H1 (cell line): ENCODE measurements at regions of chr3 and their contacts with region 1.

Region 1: GRCh38 chr3:170414202-170414663 is 4.4 kb upstream of the CLDN11 start:
- DNase-seq: no peak
- H3K4me3 ChIP-seq: no peak overlapping the region
- H3K27ac ChIP-seq: no peak overlapping the region
- H3K4me1 ChIP-seq: peaks cover 0 to 5% (median 4%) of the 10 kb centered on the region in 4 experiments; a peak in 6 of 7 replicates
- H3K27me3 ChIP-seq: peaks cover 5 to 18% (median 16%) of the 10 kb centered on the region in 4 experiments
- CTCF ChIP-seq: peak; percentile 39 to 95 (median 94)
- EP300 ChIP-seq: no peak
- POLR2A ChIP-seq: no peak
- RAD21 ChIP-seq: peak; percentile 98 to 99

Region 2: GRCh38 chr3:169966428-169966950 is 447.7 kb before region 1 on chr3 and contains the start of gene SEC62:
- CTCF ChIA-PET with region 1: no interaction called
- POLR2A ChIA-PET with region 1: no interaction called
- DNase-seq: peak; percentile 85 to 98
- H3K4me3 ChIP-seq: peak within 1 kb of the TSS; percentile 85 to 98 (median 90)
- H3K27ac ChIP-seq: peak within 1 kb of the TSS; percentile 82
- H3K4me1 ChIP-seq: peaks cover 0 to 12% (median 1%) of the 10 kb centered on the region in 4 experiments; a peak in 3 of 7 replicates
- H3K27me3 ChIP-seq: no peaks in the 10 kb centered on the region
- CTCF ChIP-seq: peak; percentile 38 to 68 (median 47)
- EP300 ChIP-seq: peak in 1 of 2 experiments; percentile 65; a peak in 1 of 3 replicates
- POLR2A ChIP-seq: peak; percentile 93 to 95
- RAD21 ChIP-seq: peak; percentile 61 to 72
- total RNA-seq, gene SEC62: 67.8 and 68.1 TPM in 2 replicates

Region 3: GRCh38 chr3:170317954-170318353 is 96.3 kb before region 1 on chr3:
- CTCF ChIA-PET with region 1: interaction called, 13 read pairs
- POLR2A ChIA-PET with region 1: no interaction called
- DNase-seq: no peak
- H3K4me3 ChIP-seq: no peak overlapping the region
- H3K27ac ChIP-seq: no peak overlapping the region
- H3K4me1 ChIP-seq: peaks cover 0 to 4% (median 1%) of the 10 kb centered on the region in 4 experiments; a peak in 2 of 7 replicates
- H3K27me3 ChIP-seq: no peaks in the 10 kb centered on the region; a peak in 1 of 7 replicates
- CTCF ChIP-seq: no peak
- EP300 ChIP-seq: no peak
- POLR2A ChIP-seq: no peak
- RAD21 ChIP-seq: no peak

Region 4: DNA sequence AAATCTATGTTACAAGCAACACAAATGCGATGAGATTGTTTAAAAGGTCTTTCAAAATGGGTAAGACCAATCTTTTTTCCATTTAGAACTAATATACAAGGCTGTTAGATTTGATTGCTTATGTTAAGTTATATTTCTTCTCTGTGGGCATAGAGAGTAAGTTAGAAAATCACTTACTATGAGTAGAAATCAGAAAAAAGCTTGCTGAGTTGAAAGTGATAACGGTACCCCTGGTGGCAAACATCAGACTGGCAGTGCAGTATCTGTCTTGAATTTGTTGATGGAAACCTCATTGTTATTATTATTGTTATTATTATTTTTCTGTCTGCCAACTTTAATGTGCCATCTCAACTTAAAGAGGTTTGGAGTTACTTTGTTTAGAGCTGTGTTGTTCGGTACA is 16.8 kb after region 1 on chr3:
- CTCF ChIA-PET with region 1: interaction called, 15 read pairs
- POLR2A ChIA-PET with region 1: no interaction called
- DNase-seq: no peak
- H3K4me3 ChIP-seq: no peak overlapping the region
- H3K27ac ChIP-seq: no peak overlapping the region
- H3K4me1 ChIP-seq: no peaks in the 10 kb centered on the region; a peak in 1 of 7 replicates
- H3K27me3 ChIP-seq: no peaks in the 10 kb centered on the region
- CTCF ChIP-seq: no peak
- EP300 ChIP-seq: no peak
- POLR2A ChIP-seq: no peak
- RAD21 ChIP-seq: no peak; a peak in 1 of 4 replicates

Region 5: DNA sequence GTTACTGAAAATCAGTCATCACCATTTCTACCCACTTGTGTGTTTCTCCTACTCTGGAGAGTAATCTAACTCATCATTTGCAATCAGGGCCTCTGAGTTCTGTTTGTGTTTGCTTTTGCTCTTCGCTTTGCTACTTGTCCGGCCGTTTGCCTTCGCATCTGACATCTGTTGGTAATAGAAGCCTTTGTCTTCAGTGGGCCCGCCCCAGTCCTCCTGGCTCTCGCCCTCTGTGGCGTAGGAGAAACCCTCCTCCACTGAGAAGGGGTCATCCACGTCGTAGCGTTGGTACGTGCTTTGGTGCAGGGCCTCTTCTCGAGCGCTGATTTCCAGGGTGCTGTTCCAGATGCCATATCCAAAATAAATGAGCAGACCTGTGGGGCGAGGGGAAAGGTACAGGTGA is 52.8 kb after region 1 on chr3:
- CTCF ChIA-PET with region 1: interaction called, 12 read pairs
- POLR2A ChIA-PET with region 1: interaction called, 3 read pairs
- DNase-seq: peak in 1 of 2 experiments; percentile 46
- H3K4me3 ChIP-seq: no peak overlapping the region
- H3K27ac ChIP-seq: no peak overlapping the region
- H3K4me1 ChIP-seq: peaks cover 0 to 9% (median 0%) of the 10 kb centered on the region in 4 experiments; a peak in 1 of 7 replicates
- H3K27me3 ChIP-seq: no peaks in the 10 kb centered on the region
- CTCF ChIP-seq: no peak
- EP300 ChIP-seq: no peak
- POLR2A ChIP-seq: no peak
- RAD21 ChIP-seq: no peak

Region 6: GRCh38 chr3:170699158-170700053 is 285.2 kb after region 1 on chr3:
- CTCF ChIA-PET with region 1: interaction called, 14 read pairs
- POLR2A ChIA-PET with region 1: no interaction called
- DNase-seq: no peak
- H3K4me3 ChIP-seq: no peak overlapping the region
- H3K27ac ChIP-seq: no peak overlapping the region
- H3K4me1 ChIP-seq: peaks cover 0 to 6% (median 2%) of the 10 kb centered on the region in 4 experiments; a peak in 2 of 7 replicates
- H3K27me3 ChIP-seq: no peaks in the 10 kb centered on the region; a peak in 1 of 7 replicates
- CTCF ChIP-seq: no peak
- EP300 ChIP-seq: no peak
- POLR2A ChIP-seq: no peak
- RAD21 ChIP-seq: no peak